Natural killer cell (primary cell): ENCODE measurements at regions of chr6 and their contacts with region 1.

Region 1: GRCh38 chr6:143575440-143575839 is 63.9 kb upstream of the FUCA2 start:
- DNase-seq: peak in 1 of 2 donors; percentile 85
- ATAC-seq: peak; percentile 93 to 99 (median 99)
- H3K4me3 ChIP-seq: no peak overlapping the region
- H3K4me3 Mint-ChIP-seq: no peak overlapping the region
- H3K27ac ChIP-seq: no peak overlapping the region
- H3K27ac Mint-ChIP-seq: no peak overlapping the region
- H3K4me1 ChIP-seq: no peaks in the 10 kb centered on the region
- H3K4me1 Mint-ChIP-seq: peaks cover 0 to 4% of the 10 kb centered on the region in 2 donors
- H3K27me3 ChIP-seq: no peaks in the 10 kb centered on the region
- H3K27me3 Mint-ChIP-seq: no peaks in the 10 kb centered on the region
- CTCF ChIP-seq: peak; percentile 87

Region 2: GRCh38 chr6:142474531-142475289 is 1100.7 kb before region 1 on chr6:
- intact Hi-C with region 1: loop called (anchors 10 kb)
- DNase-seq: peak in 1 of 2 donors; percentile 73
- ATAC-seq: peak in 2 of 3 donors; percentile 52 to 70
- H3K4me3 ChIP-seq: no peak overlapping the region
- H3K4me3 Mint-ChIP-seq: no peak overlapping the region
- H3K27ac ChIP-seq: no peak overlapping the region
- H3K27ac Mint-ChIP-seq: no peak overlapping the region
- H3K4me1 ChIP-seq: no peaks in the 10 kb centered on the region
- H3K4me1 Mint-ChIP-seq: peaks cover 6% of the 10 kb centered on the region in 2 donors
- H3K27me3 ChIP-seq: peaks cover 2% of the 10 kb centered on the region
- H3K27me3 Mint-ChIP-seq: peaks cover 5 to 8% of the 10 kb centered on the region in 2 donors
- CTCF ChIP-seq: peak; percentile 89

Region 3: DNA sequence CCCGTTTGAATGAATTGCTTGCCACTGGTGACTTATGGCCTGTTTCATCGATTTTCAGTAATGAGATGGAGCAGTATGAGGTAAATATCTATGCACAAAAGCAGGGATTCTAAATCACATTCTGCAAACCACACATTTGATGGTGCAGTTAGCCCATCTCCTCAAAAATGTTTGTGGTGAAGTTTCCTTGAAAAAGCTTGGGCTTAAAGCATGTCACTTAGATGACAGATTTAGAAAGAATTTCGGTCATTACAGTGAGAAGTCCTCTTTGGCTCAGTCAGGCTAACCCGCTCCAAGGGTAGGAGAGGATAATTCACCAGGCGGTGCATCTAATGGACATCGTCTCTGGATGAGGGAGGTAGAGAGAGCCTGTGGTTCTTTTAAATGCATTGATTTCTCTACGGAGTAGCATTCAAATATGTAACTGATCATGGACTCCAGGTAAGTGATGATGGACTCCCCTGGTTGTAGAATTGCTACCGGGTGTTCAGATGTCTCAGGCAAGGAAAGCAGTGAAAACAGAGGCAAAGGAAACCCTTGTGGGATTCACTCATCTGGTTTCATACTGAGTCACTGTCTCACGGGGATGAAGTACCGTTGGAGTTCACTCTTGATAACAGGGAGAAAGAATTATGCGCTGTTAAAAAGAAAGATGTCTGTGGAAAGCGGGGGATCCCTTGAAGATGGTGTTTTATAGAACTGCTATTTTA is 449.4 kb before region 1 on chr6:
- intact Hi-C with region 1: no loop called
- DNase-seq: no peak
- ATAC-seq: no peak
- H3K4me3 ChIP-seq: no peak overlapping the region
- H3K4me3 Mint-ChIP-seq: no peak overlapping the region
- H3K27ac ChIP-seq: no peak overlapping the region
- H3K27ac Mint-ChIP-seq: no peak overlapping the region
- H3K4me1 ChIP-seq: no peaks in the 10 kb centered on the region
- H3K4me1 Mint-ChIP-seq: peaks cover 0 to 7% of the 10 kb centered on the region in 2 donors
- H3K27me3 ChIP-seq: no peaks in the 10 kb centered on the region
- H3K27me3 Mint-ChIP-seq: no peaks in the 10 kb centered on the region
- CTCF ChIP-seq: no peak

Region 4: GRCh38 chr6:143510991-143511891 is 64.2 kb before region 1 on chr6 and contains the start of gene FUCA2:
- intact Hi-C with region 1: no loop called
- DNase-seq: peak; percentile 51 to 83
- ATAC-seq: peak; percentile 75 to 82 (median 80)
- H3K4me3 ChIP-seq: peak within 1 kb of the TSS; percentile 66
- H3K4me3 Mint-ChIP-seq: peak within 1 kb of the TSS; percentile 97
- H3K27ac ChIP-seq: peak within 1 kb of the TSS; percentile 45
- H3K27ac Mint-ChIP-seq: peak within 1 kb of the TSS; percentile 83 to 96
- H3K4me1 ChIP-seq: peaks cover 17% of the 10 kb centered on the region
- H3K4me1 Mint-ChIP-seq: peaks cover 14 to 34% of the 10 kb centered on the region in 2 donors
- H3K27me3 ChIP-seq: no peaks in the 10 kb centered on the region
- H3K27me3 Mint-ChIP-seq: peaks cover 0 to 5% of the 10 kb centered on the region in 2 donors
- CTCF ChIP-seq: no peak
- total RNA-seq, gene FUCA2: 10.5 to 15.5 (median 13.0) TPM

Region 5: DNA sequence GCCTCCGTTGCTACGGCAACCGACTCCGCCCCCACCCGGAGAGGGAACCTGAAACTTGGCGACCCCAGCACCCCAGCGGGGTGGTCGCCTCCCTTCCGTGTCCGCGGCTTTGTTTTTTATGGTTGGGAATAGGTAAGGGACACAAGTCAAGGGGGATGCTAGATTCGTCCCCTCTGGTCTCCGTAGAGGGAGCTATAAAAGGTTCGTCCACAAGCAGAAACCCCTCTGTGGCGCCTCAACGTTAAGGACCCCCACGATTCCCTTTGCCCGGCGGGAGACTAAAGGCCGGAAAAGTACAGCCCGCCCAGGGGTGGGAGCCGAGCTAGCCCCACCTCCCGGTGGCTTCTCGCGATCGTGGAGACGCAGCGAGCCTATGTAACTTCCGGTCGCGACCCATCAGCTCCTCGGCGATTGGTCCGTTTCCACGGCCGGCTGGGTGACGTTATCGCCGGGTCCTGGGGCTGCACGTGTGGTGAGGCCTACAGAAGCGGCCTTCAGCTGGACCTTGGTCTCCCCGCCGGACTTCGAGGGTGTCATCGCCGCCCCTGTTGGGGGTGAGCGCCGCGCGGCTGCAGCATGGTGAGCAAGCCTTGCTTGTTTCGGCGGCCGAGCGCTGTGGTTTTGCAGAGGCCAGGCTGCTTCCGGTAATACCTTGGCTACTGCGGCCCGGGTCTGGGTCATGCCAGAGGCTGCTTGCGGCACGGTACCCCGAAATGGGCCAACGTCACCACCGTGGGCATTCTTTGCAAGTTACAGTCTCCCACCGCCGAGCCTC is 267.6 kb after region 1 on chr6 and contains the start of gene LTV1:
- intact Hi-C with region 1: loop called (anchors 10 kb)
- DNase-seq: peak; percentile 90 to 96
- ATAC-seq: peak; percentile 97 to 99 (median 98)
- H3K4me3 ChIP-seq: peak within 1 kb of the TSS; percentile 98
- H3K4me3 Mint-ChIP-seq: peak within 1 kb of the TSS; percentile 93
- H3K27ac ChIP-seq: peak within 1 kb of the TSS; percentile 94
- H3K27ac Mint-ChIP-seq: peak within 1 kb of the TSS; percentile 94
- H3K4me1 ChIP-seq: peaks cover 21% of the 10 kb centered on the region
- H3K4me1 Mint-ChIP-seq: peaks cover 17 to 18% of the 10 kb centered on the region in 2 donors
- H3K27me3 ChIP-seq: no peaks in the 10 kb centered on the region
- H3K27me3 Mint-ChIP-seq: peaks cover 0 to 5% of the 10 kb centered on the region in 2 donors
- CTCF ChIP-seq: no peak
- total RNA-seq, gene LTV1: 21.7 to 24.7 (median 21.7) TPM

Region 6: GRCh38 chr6:143940011-143940597 is 364.7 kb after region 1 on chr6:
- intact Hi-C with region 1: loop called (anchors 1 kb)
- DNase-seq: peak; percentile 30 to 78
- ATAC-seq: peak; percentile 84 to 98 (median 96)
- H3K4me3 ChIP-seq: no peak overlapping the region
- H3K4me3 Mint-ChIP-seq: no peak overlapping the region
- H3K27ac ChIP-seq: no peak overlapping the region
- H3K27ac Mint-ChIP-seq: no peak overlapping the region
- H3K4me1 ChIP-seq: peaks cover 7% of the 10 kb centered on the region
- H3K4me1 Mint-ChIP-seq: peaks cover 10 to 15% of the 10 kb centered on the region in 2 donors
- H3K27me3 ChIP-seq: no peaks in the 10 kb centered on the region
- H3K27me3 Mint-ChIP-seq: no peaks in the 10 kb centered on the region
- CTCF ChIP-seq: peak; percentile 76

Region 7: DNA sequence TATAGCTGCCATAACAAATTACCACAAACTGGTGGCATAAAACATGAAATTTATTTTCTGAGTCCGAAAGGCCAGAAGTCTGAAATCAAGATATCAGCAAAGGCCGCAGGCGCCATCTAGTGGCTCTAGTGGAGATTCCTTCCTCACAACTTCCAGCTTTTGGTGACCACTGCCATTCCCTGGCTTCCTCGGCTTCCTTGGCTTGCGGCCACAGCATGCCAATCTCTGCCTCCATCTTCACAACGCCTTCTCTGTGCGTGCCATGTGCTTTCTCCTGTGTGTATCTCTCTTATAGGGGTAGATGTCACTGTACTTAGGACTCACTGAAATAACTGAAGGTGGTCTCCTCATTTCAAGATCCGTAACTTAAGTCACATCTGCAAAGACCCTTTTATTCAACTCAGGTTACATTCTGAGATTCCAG is 438.1 kb after region 1 on chr6:
- intact Hi-C with region 1: loop called (anchors 1 kb)
- DNase-seq: peak; percentile 43 to 81
- ATAC-seq: peak; percentile 52 to 63 (median 55)
- H3K4me3 ChIP-seq: no peak overlapping the region
- H3K4me3 Mint-ChIP-seq: no peak overlapping the region
- H3K27ac ChIP-seq: no peak overlapping the region
- H3K27ac Mint-ChIP-seq: no peak overlapping the region
- H3K4me1 ChIP-seq: no peaks in the 10 kb centered on the region
- H3K4me1 Mint-ChIP-seq: peaks cover 4% of the 10 kb centered on the region in 2 donors
- H3K27me3 ChIP-seq: no peaks in the 10 kb centered on the region
- H3K27me3 Mint-ChIP-seq: peaks cover 10% of the 10 kb centered on the region in 2 donors
- CTCF ChIP-seq: peak; percentile 99

Region 8: DNA sequence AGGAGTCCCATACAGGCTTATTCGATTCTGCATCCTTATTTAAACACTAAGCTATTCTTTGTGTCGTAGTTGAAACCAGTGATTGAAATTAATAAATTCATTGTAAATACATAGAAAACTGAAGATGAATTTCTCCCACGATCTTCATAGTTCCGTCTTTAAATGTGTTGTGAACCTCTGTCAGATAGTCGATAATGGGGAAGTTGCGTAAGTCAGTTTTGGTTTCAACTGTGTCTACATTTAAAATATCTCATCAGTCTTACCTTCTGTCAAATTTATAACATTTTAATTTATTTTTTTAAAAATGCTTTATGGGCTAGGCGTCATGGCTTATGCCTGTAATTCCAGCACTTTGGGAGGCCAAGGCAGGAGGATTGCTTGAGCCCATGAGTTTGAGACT is 587.5 kb after region 1 on chr6:
- intact Hi-C with region 1: no loop called
- DNase-seq: no peak
- ATAC-seq: peak in 2 of 3 donors; percentile 35 to 60
- H3K4me3 ChIP-seq: no peak overlapping the region
- H3K4me3 Mint-ChIP-seq: no peak overlapping the region
- H3K27ac ChIP-seq: no peak overlapping the region
- H3K27ac Mint-ChIP-seq: peak overlapping the region; percentile 32 to 38
- H3K4me1 ChIP-seq: peaks cover 8% of the 10 kb centered on the region
- H3K4me1 Mint-ChIP-seq: peaks cover 29 to 43% of the 10 kb centered on the region in 2 donors
- H3K27me3 ChIP-seq: no peaks in the 10 kb centered on the region
- H3K27me3 Mint-ChIP-seq: no peaks in the 10 kb centered on the region
- CTCF ChIP-seq: no peak

Region 9: GRCh38 chr6:144482142-144482541 is 906.7 kb after region 1 on chr6:
- intact Hi-C with region 1: loop called (anchors 10 kb)
- DNase-seq: peak; percentile 54 to 83
- ATAC-seq: peak; percentile 56 to 86 (median 78)
- H3K4me3 ChIP-seq: no peak overlapping the region
- H3K4me3 Mint-ChIP-seq: no peak overlapping the region
- H3K27ac ChIP-seq: no peak overlapping the region
- H3K27ac Mint-ChIP-seq: peak overlapping the region; percentile 56 to 72
- H3K4me1 ChIP-seq: no peaks in the 10 kb centered on the region
- H3K4me1 Mint-ChIP-seq: peaks cover 19 to 37% of the 10 kb centered on the region in 2 donors
- H3K27me3 ChIP-seq: no peaks in the 10 kb centered on the region
- H3K27me3 Mint-ChIP-seq: no peaks in the 10 kb centered on the region
- CTCF ChIP-seq: peak; percentile 71